ENCODE measurements at regions of chr9 and their contacts with region 1.

Region 1: DNA sequence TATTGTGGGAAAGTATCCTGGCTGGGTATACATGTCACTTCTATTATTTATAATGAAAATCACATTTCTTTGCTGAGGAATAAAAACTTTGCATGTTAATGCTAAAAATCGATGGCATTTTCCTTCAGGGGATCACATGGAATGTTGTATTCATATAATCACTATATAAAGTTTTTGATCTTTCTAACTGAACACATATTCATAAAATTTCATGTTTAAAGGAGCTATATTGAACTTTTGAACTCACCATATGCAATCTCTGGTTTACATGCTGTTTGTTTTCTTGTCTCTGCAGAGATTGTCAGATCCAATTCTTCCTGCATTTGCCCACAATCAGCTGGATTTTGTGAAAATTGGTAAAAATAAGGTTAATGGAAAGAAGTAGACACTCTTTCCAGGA is 33.4 kb upstream of the TRAF1 start:
- DNase-seq: no peak
- ATAC-seq: no peak
- H3K4me3 ChIP-seq: no peak overlapping the region
- H3K4me3 Mint-ChIP-seq: no peak overlapping the region
- H3K27ac ChIP-seq: no peak overlapping the region
- H3K27ac Mint-ChIP-seq: no peak overlapping the region
- H3K4me1 ChIP-seq: no peaks in the 10 kb centered on the region
- H3K4me1 Mint-ChIP-seq: no peaks in the 10 kb centered on the region
- H3K27me3 ChIP-seq: no peaks in the 10 kb centered on the region
- H3K27me3 Mint-ChIP-seq: no peaks in the 10 kb centered on the region
- CTCF ChIP-seq: no peak

Region 2: DNA sequence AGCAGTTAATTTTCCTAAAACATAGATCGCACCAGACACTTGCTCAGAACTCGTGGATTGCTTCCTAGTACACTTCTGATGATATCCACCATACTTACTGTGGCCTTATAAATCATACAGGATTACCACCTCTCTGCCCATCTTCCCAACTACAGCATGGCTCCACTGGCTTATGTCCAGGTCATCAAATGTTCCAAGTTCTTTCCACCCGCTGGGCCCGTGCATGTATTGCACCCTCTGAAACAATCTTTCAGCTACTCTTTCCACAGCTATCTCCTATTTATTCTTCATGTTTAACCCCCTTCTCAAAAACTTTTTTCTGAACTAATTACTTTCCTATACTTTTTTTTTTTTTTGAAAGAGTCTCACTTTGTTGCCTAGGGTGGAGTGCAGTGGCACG is 185.3 kb before region 1 on chr9:
- CTCF ChIA-PET with region 1: no interaction called
- POLR2A ChIA-PET with region 1: no interaction called
- intact Hi-C with region 1: loop called in 1 of 2 experiments (anchors 5 kb)
- DNase-seq: no peak
- ATAC-seq: no peak
- H3K4me3 ChIP-seq: no peak overlapping the region
- H3K4me3 Mint-ChIP-seq: no peak overlapping the region
- H3K27ac ChIP-seq: no peak overlapping the region
- H3K27ac Mint-ChIP-seq: no peak overlapping the region
- H3K4me1 ChIP-seq: no peaks in the 10 kb centered on the region
- H3K4me1 Mint-ChIP-seq: peaks cover 15% of the 10 kb centered on the region
- H3K27me3 ChIP-seq: no peaks in the 10 kb centered on the region
- H3K27me3 Mint-ChIP-seq: no peaks in the 10 kb centered on the region
- CTCF ChIP-seq: no peak

Region 3: DNA sequence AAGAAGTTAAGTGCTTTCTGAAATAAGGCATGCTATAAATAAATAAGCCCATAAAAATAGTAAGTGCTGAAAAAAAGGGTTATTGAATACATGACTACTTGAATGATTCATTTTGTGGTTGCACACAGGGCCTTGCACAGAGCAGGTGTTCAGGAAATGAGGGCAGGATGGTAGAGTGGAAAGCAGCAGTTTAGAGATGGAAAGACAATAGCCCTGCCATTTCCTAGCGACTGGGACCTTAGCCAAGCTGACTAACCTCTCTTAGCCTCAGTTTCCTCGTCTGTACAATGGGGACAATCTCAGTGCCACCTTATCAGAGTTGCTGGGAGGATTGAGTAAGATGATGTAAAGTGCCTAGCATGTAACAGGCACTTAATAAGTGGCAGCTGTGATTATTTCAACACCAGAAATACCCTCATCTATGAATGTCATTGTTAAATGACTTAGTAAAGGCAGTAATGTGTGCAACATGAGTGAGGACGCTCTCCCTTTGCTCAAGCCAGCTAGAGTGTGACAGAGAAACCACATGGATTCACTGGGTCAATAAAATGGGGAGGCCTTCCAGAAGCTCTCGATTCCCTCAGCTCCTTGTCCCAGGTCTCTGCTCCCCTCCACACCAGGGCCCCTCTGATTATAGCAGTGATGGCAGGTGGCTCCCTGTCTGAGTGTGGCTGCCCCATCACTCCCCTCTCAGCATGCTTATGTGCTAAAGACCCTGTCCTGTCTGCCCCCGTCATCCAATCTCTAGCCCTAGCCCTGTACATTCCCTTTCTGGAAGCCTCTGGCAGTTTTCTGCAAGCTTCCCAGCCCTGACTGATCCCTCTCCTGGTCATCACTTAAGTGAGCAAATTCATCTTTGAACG is 67.0 kb before region 1 on chr9:
- CTCF ChIA-PET with region 1: no interaction called
- POLR2A ChIA-PET with region 1: no interaction called
- intact Hi-C with region 1: no loop called
- DNase-seq: peak in 13 of 14 experiments; percentile 50 to 89 (median 59)
- ATAC-seq: peak; percentile 55
- H3K4me3 ChIP-seq: no peak overlapping the region
- H3K4me3 Mint-ChIP-seq: peak overlapping the region; percentile 28
- H3K27ac ChIP-seq: peak overlapping the region; percentile 86 to 88
- H3K27ac Mint-ChIP-seq: peak overlapping the region; percentile 98
- H3K4me1 ChIP-seq: peaks cover 96% of the 10 kb centered on the region
- H3K4me1 Mint-ChIP-seq: peaks cover 77% of the 10 kb centered on the region
- H3K27me3 ChIP-seq: no peaks in the 10 kb centered on the region
- H3K27me3 Mint-ChIP-seq: no peaks in the 10 kb centered on the region
- CTCF ChIP-seq: no peak

Measured in CD4-positive, alpha-beta T cell (primary cell).